ENCODE measurements at regions of chr17 and their contacts with region 1.

Region 1: GRCh38 chr17:2416010-2416734 is 15.3 kb upstream of the MNT start:
- DNase-seq: peak; percentile 65 to 87
- ATAC-seq: peak; percentile 64 to 79
- H3K4me3 ChIP-seq: no peak overlapping the region
- H3K27ac ChIP-seq: peak overlapping the region; percentile 13 to 59 (median 44)
- H3K4me1 ChIP-seq: peaks cover 16 to 28% of the 10 kb centered on the region in 2 donors
- H3K27me3 ChIP-seq: no peaks in the 10 kb centered on the region
- CTCF ChIP-seq: peak; percentile 96 to 98 (median 97)
- POLR2A ChIP-seq: no peak

Region 2: GRCh38 chr17:2369551-2370210 is 46.5 kb before region 1 on chr17:
- in situ Hi-C with region 1: no loop called
- intact Hi-C with region 1: loop called (anchors 10 kb)
- DNase-seq: no peak
- ATAC-seq: no peak
- H3K4me3 ChIP-seq: no peak overlapping the region
- H3K27ac ChIP-seq: no peak overlapping the region
- H3K4me1 ChIP-seq: peaks cover 3 to 5% of the 10 kb centered on the region in 2 donors
- H3K27me3 ChIP-seq: no peaks in the 10 kb centered on the region
- CTCF ChIP-seq: no peak
- POLR2A ChIP-seq: no peak

Region 3: GRCh38 chr17:2374549-2375277 is 41.5 kb before region 1 on chr17:
- in situ Hi-C with region 1: loop called in 2 of 4 experiments (anchors 5 kb)
- intact Hi-C with region 1: loop called (anchors 10 kb)
- DNase-seq: no peak
- ATAC-seq: peak in 1 of 2 donors; percentile 56
- H3K4me3 ChIP-seq: no peak overlapping the region
- H3K27ac ChIP-seq: peak overlapping the region in 1 of 4 donors; percentile 57
- H3K4me1 ChIP-seq: peaks cover 0 to 5% of the 10 kb centered on the region in 2 donors
- H3K27me3 ChIP-seq: no peaks in the 10 kb centered on the region
- CTCF ChIP-seq: no peak
- POLR2A ChIP-seq: no peak

Region 4: DNA sequence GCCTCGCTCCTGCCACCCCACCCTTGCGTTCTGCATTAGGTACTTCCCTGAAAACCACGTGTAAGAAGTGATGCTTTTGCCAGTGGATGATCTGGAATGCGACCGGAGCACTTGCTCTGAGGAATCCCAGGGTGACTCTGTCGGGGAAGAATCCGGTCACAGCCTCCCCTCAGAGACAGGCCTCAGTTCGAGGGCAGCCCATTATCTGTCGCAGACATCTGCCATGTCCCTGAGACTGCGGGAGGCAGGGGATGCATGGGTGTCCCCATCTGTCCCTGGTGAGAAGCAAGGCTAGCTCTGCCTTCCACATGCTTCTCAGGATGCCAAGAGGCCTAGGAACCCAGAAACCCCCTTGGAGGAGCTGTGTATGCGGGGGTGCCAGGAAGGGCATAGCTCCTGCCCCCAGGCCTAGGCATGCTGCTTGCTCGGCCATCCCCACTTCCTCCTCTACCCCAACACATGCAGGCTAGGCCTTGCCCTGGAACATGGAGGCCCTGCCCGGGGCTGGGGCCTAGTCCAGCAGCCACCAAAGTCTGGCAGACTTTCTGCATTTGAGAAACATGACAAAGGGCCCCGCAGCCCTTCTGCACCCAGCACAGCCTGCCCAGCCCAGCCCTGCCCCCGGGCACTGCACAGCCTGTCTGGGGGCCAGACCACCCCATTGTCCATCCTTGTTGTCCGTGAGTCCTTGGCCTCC is 35.8 kb before region 1 on chr17:
- in situ Hi-C with region 1: loop called in 3 of 4 experiments (anchors 5 kb)
- intact Hi-C with region 1: loop called (anchors 1 kb)
- DNase-seq: no peak
- ATAC-seq: no peak
- H3K4me3 ChIP-seq: no peak overlapping the region
- H3K27ac ChIP-seq: no peak overlapping the region
- H3K4me1 ChIP-seq: peaks cover 24 to 31% of the 10 kb centered on the region in 2 donors
- H3K27me3 ChIP-seq: no peaks in the 10 kb centered on the region
- CTCF ChIP-seq: no peak
- POLR2A ChIP-seq: no peak

Region 5: GRCh38 chr17:2386400-2387085 is 29.6 kb before region 1 on chr17:
- in situ Hi-C with region 1: loop called in 1 of 4 experiments (anchors 5 kb)
- intact Hi-C with region 1: loop called (anchors 1 kb)
- DNase-seq: no peak
- ATAC-seq: no peak
- H3K4me3 ChIP-seq: no peak overlapping the region
- H3K27ac ChIP-seq: peak overlapping the region in 2 of 4 donors; percentile 91 to 93
- H3K4me1 ChIP-seq: peaks cover 54 to 75% of the 10 kb centered on the region in 2 donors
- H3K27me3 ChIP-seq: no peaks in the 10 kb centered on the region
- CTCF ChIP-seq: no peak
- POLR2A ChIP-seq: no peak

Measured in gastrocnemius medialis (tissue), 4 donors.